ENCODE measurements at regions of chr15 and their contacts with region 1.

Region 1: GRCh38 chr15:66765478-66766281 is 63.6 kb downstream of the SMAD6 start:
- DNase-seq: no peak
- H3K4me3 ChIP-seq: no peak overlapping the region
- CTCF ChIP-seq: no peak

Region 2: GRCh38 chr15:66780172-66780972 is 14.7 kb after region 1 on chr15:
- CTCF ChIA-PET with region 1: interaction called, 68 read pairs
- POLR2A ChIA-PET with region 1: no interaction called
- DNase-seq: no peak
- H3K4me3 ChIP-seq: no peak overlapping the region
- CTCF ChIP-seq: no peak